PC-9 (cell line): ENCODE measurements at regions of chr3 and their contacts with region 1.

Region 1: GRCh38 chr3:159091936-159092335 is 290.1 kb downstream of the MFSD1 start:
- DNase-seq: no peak
- H3K4me3 ChIP-seq: no peak overlapping the region
- H3K27ac ChIP-seq: no peak overlapping the region
- H3K4me1 ChIP-seq: no peaks in the 10 kb centered on the region
- H3K27me3 ChIP-seq: no peaks in the 10 kb centered on the region
- CTCF ChIP-seq: 0 out of 2 replicates have a peak, but pooled peaks have one; percentile 18

Region 2: GRCh38 chr3:158560979-158561378 is 531.0 kb before region 1 on chr3:
- CTCF ChIA-PET with region 1: no interaction called
- POLR2A ChIA-PET with region 1: no interaction called
- intact Hi-C with region 1: no loop called
- DNase-seq: no peak
- H3K4me3 ChIP-seq: no peak overlapping the region
- H3K27ac ChIP-seq: no peak overlapping the region
- H3K4me1 ChIP-seq: no peaks in the 10 kb centered on the region
- H3K27me3 ChIP-seq: no peaks in the 10 kb centered on the region
- CTCF ChIP-seq: no peak

Region 3: DNA sequence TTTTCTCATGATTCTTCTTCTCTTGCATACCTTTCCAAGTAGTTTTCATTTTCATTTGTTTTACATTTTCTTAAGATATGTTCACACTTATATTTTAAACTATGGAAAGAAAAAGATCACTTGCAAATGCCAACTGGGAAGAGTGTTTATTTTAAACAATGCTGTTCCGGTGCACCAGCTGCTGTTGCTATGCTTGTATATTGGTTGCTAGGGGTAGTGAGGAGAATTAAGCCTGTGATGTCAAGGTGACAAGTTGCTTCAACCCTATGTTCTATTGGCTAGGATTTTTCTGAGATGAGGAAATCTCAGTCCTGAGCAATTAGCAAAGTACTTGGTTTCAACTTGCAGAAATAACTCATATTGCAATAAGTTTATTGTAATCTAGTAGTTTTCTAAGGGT is 210.0 kb after region 1 on chr3:
- CTCF ChIA-PET with region 1: no interaction called
- POLR2A ChIA-PET with region 1: interaction called, 10 read pairs
- intact Hi-C with region 1: no loop called
- DNase-seq: no peak
- H3K4me3 ChIP-seq: no peak overlapping the region
- H3K27ac ChIP-seq: no peak overlapping the region
- H3K4me1 ChIP-seq: no peaks in the 10 kb centered on the region
- H3K27me3 ChIP-seq: no peaks in the 10 kb centered on the region
- CTCF ChIP-seq: no peak

Region 4: GRCh38 chr3:159548675-159549335 is 456.9 kb after region 1 on chr3:
- CTCF ChIA-PET with region 1: no interaction called
- POLR2A ChIA-PET with region 1: no interaction called
- intact Hi-C with region 1: no loop called
- DNase-seq: no peak
- H3K4me3 ChIP-seq: no peak overlapping the region
- H3K27ac ChIP-seq: no peak overlapping the region
- H3K4me1 ChIP-seq: no peaks in the 10 kb centered on the region; the same call in 1 of the 2 replicates
- H3K27me3 ChIP-seq: no peaks in the 10 kb centered on the region
- CTCF ChIP-seq: no peak

Region 5: DNA sequence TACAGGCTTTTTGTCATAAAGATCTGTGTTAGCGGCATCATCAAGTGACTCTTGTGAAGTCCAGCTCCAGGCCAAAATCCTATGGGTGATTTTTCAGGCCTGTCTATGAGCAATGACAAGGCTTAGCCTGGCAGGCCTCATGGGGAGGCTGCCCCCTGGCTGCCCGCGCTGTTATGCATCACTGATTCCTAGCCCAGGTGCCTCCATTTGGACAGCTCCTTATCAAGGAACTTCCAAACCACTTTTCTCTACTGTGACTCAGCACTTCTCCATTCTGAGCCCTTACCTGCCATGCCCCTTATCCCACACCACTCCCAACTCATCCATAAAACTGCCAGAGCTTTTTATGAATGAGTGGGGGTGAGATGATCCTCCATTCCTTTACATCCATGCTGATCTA is 1041.8 kb after region 1 on chr3:
- CTCF ChIA-PET with region 1: no interaction called
- POLR2A ChIA-PET with region 1: no interaction called
- intact Hi-C with region 1: no loop called
- DNase-seq: peak; percentile 31 to 49
- H3K4me3 ChIP-seq: no peak overlapping the region
- H3K27ac ChIP-seq: peak overlapping the region; percentile 81
- H3K4me1 ChIP-seq: peaks cover 35% of the 10 kb centered on the region
- H3K27me3 ChIP-seq: no peaks in the 10 kb centered on the region
- CTCF ChIP-seq: no peak